Activated B cell treated with CpG ODN at 0.5 μM for 24 hours (primary cell): ENCODE measurements at regions of chr2 and their contacts with region 1.

Region 1: DNA sequence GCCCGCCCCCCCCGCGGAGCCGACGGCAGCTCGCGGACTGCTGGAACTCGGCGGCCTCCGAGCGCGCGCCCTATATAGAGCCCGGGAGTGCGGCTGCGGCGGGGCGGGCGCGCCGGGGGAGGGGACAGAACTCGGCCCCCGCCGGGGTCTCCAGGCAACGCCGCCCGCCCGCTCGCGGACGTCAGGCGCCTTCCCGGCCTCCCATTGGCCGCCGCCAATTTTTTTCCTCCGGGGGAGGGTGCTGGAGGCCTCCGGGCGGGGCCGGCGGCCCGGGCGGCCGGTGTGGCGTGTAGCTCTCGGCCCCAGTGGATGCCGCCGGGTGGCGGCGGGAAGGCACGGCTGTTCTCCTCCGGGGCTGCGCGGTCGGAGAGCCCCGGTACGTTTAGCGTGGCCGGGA is at the start of gene ZFP36L2:
- DNase-seq: peak; percentile 93
- ATAC-seq: peak; percentile 71
- H3K4me3 Mint-ChIP-seq: peak within 1 kb of the TSS; percentile 95
- H3K27ac Mint-ChIP-seq: peak within 1 kb of the TSS; percentile 95
- H3K4me1 Mint-ChIP-seq: peaks cover 56% of the 10 kb centered on the region
- H3K27me3 Mint-ChIP-seq: peaks cover 2% of the 10 kb centered on the region
- CTCF ChIP-seq: no peak
- total RNA-seq, gene ZFP36L2: 56.7 and 62.1 TPM in 2 replicates

Region 2: DNA sequence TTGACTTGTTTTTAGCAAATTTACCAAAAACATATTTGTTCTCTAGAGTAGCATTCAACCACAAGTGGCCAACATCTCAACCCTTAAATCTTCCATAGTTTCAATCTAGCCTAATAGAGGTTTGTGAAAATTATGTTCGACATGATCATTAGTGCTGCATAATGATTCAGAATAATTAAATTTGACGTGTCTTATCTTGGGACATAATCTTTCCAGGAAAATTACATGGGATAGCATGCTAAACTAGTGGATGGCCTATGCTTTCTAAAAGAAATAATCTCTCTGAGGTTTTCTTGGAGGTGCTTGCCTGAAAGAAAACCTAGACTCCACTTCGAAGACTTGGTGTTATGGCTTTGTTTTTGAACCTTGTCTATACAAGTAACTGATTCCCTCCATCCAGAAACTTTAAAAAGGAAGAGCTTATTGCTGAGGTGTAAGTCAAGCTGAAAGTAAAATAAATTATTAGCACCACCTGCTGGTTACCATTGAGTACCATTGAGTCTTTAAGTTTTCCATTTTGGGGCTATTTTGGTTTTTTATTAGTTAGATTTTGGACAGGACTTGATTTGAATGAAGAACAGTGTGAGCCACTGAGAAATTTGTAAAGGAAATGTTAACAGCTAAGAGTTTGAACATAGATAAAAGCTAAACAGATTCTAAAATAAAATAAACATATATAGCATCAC is 898.3 kb before region 1 on chr2:
- CTCF ChIA-PET with region 1: no interaction called
- POLR2A ChIA-PET with region 1: no interaction called
- intact Hi-C with region 1: no loop called
- DNase-seq: no peak
- ATAC-seq: no peak
- H3K4me3 Mint-ChIP-seq: no peak overlapping the region
- H3K27ac Mint-ChIP-seq: no peak overlapping the region
- H3K4me1 Mint-ChIP-seq: no peaks in the 10 kb centered on the region
- H3K27me3 Mint-ChIP-seq: no peaks in the 10 kb centered on the region
- CTCF ChIP-seq: no peak

Region 3: GRCh38 chr2:42810121-42810970 is 416.2 kb before region 1 on chr2:
- CTCF ChIA-PET with region 1: no interaction called
- POLR2A ChIA-PET with region 1: interaction called, 13 read pairs
- intact Hi-C with region 1: loop called (anchors 2 kb)
- DNase-seq: peak; percentile 96
- ATAC-seq: peak; percentile 79
- H3K4me3 Mint-ChIP-seq: peak overlapping the region; percentile 94
- H3K27ac Mint-ChIP-seq: peak overlapping the region; percentile 99
- H3K4me1 Mint-ChIP-seq: peaks cover 26% of the 10 kb centered on the region
- H3K27me3 Mint-ChIP-seq: no peaks in the 10 kb centered on the region
- CTCF ChIP-seq: no peak

Region 4: GRCh38 chr2:42944779-42945415 is 281.7 kb before region 1 on chr2:
- CTCF ChIA-PET with region 1: interaction called, 58 read pairs
- POLR2A ChIA-PET with region 1: interaction called, 8 read pairs
- intact Hi-C with region 1: loop called (anchors 1 kb)
- DNase-seq: no peak
- ATAC-seq: no peak
- H3K4me3 Mint-ChIP-seq: no peak overlapping the region
- H3K27ac Mint-ChIP-seq: no peak overlapping the region
- H3K4me1 Mint-ChIP-seq: peaks cover 32% of the 10 kb centered on the region
- H3K27me3 Mint-ChIP-seq: no peaks in the 10 kb centered on the region
- CTCF ChIP-seq: no peak

Region 5: DNA sequence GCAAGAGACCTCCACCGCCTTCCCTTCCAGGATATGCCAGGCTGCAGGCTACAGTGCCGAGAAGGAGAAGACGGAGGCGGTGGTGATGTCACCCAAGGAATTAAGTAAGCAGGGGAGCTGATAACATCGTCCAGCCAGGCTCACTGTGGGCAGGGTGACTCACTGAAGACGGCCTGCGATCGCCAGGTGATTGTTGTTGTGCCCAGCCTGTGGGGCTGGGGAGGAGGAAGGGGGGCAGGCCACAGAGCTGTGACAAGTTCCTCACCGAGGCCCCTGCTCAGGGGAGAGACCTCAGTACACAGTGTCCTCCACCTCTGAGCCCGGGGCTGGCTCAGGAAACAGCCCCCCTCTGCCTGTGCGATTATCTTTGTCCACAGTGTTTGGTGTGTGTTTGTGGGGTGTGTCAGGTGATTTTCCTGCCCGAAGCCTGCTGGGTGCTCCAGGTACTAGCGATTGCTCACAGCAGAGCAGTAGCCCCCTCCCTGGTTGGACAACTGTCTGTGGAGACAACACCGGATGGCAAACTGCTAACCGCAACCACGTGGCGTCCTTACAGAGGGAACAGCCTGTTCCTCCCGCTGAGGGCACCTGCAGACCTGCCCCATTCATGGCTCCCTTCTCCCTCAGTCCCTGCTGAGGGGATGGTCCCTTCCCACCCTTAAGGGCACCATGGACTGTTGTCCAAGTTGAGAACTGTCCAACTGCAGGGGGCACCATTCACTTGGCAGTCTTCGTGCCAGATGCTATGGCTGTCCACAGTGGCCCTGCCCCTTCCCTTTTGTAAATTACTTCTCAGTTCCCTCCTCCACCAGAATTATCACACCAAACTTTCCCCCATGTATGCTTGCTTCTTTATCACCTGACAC is 95.3 kb before region 1 on chr2:
- CTCF ChIA-PET with region 1: interaction called, 336 read pairs
- POLR2A ChIA-PET with region 1: interaction called, 561 read pairs
- intact Hi-C with region 1: loop called (anchors 1 kb)
- DNase-seq: peak; percentile 62
- ATAC-seq: peak; percentile 61
- H3K4me3 Mint-ChIP-seq: peak overlapping the region; percentile 8
- H3K27ac Mint-ChIP-seq: peak overlapping the region; percentile 92
- H3K4me1 Mint-ChIP-seq: peaks cover 93% of the 10 kb centered on the region
- H3K27me3 Mint-ChIP-seq: no peaks in the 10 kb centered on the region
- CTCF ChIP-seq: no peak

Region 6: DNA sequence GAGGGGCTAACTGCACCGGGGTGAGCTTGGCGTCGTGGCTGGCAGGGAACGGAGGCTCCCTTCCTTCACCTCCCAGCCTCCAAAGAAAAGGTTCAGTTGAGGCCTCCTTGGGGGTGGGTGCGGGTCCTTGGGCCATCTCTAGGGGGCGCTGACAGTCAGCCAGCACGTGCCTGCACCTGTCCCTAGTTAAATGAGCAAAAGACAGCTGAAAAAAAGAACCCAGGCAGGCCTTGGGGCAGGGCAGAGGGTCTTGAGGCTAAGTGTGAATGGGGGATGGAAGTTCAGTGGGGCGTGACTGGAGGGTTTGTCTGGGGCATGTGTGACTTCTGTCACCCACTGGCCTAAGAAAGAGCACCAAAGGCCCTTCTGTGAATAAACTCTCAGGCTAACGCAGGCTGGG is 56.6 kb before region 1 on chr2:
- CTCF ChIA-PET with region 1: interaction called, 37 read pairs
- POLR2A ChIA-PET with region 1: interaction called, 344 read pairs
- intact Hi-C with region 1: loop called (anchors 1 kb)
- DNase-seq: peak; percentile 43
- ATAC-seq: no peak
- H3K4me3 Mint-ChIP-seq: peak overlapping the region; percentile 79
- H3K27ac Mint-ChIP-seq: peak overlapping the region; percentile 98
- H3K4me1 Mint-ChIP-seq: peaks cover 82% of the 10 kb centered on the region
- H3K27me3 Mint-ChIP-seq: no peaks in the 10 kb centered on the region
- CTCF ChIP-seq: no peak

Region 7: GRCh38 chr2:43239981-43240761 is 13.6 kb after region 1 on chr2:
- CTCF ChIA-PET with region 1: interaction called, 12 read pairs
- POLR2A ChIA-PET with region 1: interaction called, 43 read pairs
- intact Hi-C with region 1: no loop called
- DNase-seq: no peak
- ATAC-seq: peak; percentile 80
- H3K4me3 Mint-ChIP-seq: peak overlapping the region; percentile 56
- H3K27ac Mint-ChIP-seq: peak overlapping the region; percentile 91
- H3K4me1 Mint-ChIP-seq: peaks cover 40% of the 10 kb centered on the region
- H3K27me3 Mint-ChIP-seq: no peaks in the 10 kb centered on the region
- CTCF ChIP-seq: no peak

Region 8: GRCh38 chr2:43595603-43596412 is 369.3 kb after region 1 on chr2 and contains the start of gene THADA:
- CTCF ChIA-PET with region 1: no interaction called
- POLR2A ChIA-PET with region 1: no interaction called
- intact Hi-C with region 1: loop called (anchors 2 kb)
- DNase-seq: peak; percentile 86
- ATAC-seq: peak; percentile 98
- H3K4me3 Mint-ChIP-seq: peak within 1 kb of the TSS; percentile 97
- H3K27ac Mint-ChIP-seq: peak within 1 kb of the TSS; percentile 95
- H3K4me1 Mint-ChIP-seq: peaks cover 27% of the 10 kb centered on the region
- H3K27me3 Mint-ChIP-seq: no peaks in the 10 kb centered on the region
- CTCF ChIP-seq: no peak
- total RNA-seq, gene THADA: 43.2 and 51.4 TPM in 2 replicates